ENCODE measurements at regions of chr5 and their contacts with region 1.

Region 1: GRCh38 chr5:172707285-172708182 is 63.5 kb downstream of the DUSP1 start:
- DNase-seq: peak; percentile 77
- ATAC-seq: peak; percentile 99
- H3K4me3 ChIP-seq: peak overlapping the region; percentile 25; the same call in 1 of the 2 replicates
- H3K27ac ChIP-seq: no peak overlapping the region
- H3K4me1 ChIP-seq: peaks cover 4% of the 10 kb centered on the region; the same call in 1 of the 2 replicates
- H3K27me3 ChIP-seq: no peaks in the 10 kb centered on the region
- CTCF ChIP-seq: peak; percentile 88

Region 2: DNA sequence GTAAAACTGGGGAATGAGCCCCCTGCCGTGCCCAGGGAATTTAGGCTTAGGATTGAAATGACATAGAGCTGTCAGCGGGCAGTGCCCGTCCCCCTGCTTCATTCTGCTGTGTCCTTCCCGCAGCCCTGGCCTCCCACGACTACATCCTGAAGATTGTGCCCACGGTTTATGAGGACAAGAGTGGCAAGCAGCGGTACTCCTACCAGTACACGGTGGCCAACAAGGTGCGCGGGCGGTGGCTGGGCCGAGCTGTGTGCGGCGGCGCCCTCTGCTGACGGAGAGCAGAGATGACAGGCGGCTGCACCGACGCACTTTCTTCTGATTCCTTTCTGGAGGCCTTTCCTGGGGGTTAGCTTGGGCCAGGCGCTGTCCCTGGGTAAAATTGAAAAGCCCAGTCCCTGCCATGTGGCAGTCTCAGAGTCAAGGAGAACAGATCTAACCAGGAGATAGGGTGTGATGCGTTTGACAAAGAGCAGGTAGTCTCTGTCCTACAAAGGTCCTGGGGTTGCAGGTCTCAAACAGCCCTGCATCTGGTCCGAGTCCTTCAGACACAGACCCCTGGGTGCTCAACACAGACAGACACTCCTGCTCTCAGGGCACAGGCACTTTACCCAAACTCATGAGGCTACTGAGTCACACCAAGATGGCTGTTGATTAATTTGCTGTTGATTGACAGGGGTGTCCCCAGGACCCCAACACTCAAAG is 224.9 kb after region 1 on chr5:
- CTCF ChIA-PET with region 1: interaction called, 12 read pairs
- POLR2A ChIA-PET with region 1: no interaction called
- intact Hi-C with region 1: no loop called
- DNase-seq: peak; percentile 70
- ATAC-seq: peak; percentile 66
- H3K4me3 ChIP-seq: no peak overlapping the region
- H3K27ac ChIP-seq: peak overlapping the region; percentile 88
- H3K4me1 ChIP-seq: peaks cover 21% of the 10 kb centered on the region
- H3K27me3 ChIP-seq: no peaks in the 10 kb centered on the region
- CTCF ChIP-seq: peak; percentile 95

Region 3: DNA sequence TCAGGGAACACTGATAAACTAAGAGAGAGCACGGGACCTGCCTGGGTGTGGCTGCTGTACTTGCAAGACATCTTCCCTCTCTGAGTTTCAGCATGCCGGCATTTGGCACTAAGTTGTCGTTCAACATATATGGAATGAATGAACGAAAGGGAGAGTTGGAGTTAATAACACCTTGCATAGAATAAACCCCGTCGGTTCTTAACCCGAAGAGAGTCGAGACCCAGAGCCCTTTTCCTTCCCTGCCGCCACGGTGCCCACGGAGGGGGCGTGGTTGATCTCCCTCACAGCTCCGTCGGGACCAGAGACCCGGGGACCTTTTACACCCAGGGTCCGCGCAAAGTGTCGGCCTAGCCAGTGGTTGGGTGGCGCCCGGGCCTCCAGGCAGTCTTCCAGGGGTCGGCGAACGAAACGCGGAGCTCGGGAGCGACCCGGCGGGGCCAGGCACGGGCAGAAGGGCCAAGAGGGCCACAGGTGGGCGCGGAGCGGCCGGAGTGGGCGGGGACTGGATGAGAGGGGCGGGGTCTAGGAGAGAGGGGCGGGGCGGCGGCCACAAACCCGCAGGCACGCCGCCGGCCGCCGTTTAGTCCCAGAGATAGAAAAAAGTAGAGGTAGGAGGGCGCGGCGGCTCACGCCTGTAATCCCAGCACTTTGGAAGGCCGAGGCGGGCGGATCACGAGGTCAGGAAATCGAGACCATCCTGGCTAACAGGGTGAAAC is 251.0 kb after region 1 on chr5:
- CTCF ChIA-PET with region 1: interaction called, 10 read pairs
- POLR2A ChIA-PET with region 1: no interaction called
- intact Hi-C with region 1: loop called (anchors 2 kb)
- DNase-seq: peak; percentile 59
- ATAC-seq: peak; percentile 74
- H3K4me3 ChIP-seq: peak overlapping the region; percentile 92
- H3K27ac ChIP-seq: no peak overlapping the region
- H3K4me1 ChIP-seq: peaks cover 22% of the 10 kb centered on the region
- H3K27me3 ChIP-seq: no peaks in the 10 kb centered on the region
- CTCF ChIP-seq: no peak

Region 4: GRCh38 chr5:173283318-173284288 is 576.1 kb after region 1 on chr5:
- CTCF ChIA-PET with region 1: no interaction called
- POLR2A ChIA-PET with region 1: no interaction called
- intact Hi-C with region 1: loop called (anchors 2 kb)
- DNase-seq: peak; percentile 78
- ATAC-seq: peak; percentile 94
- H3K4me3 ChIP-seq: peak overlapping the region; percentile 60
- H3K27ac ChIP-seq: no peak overlapping the region
- H3K4me1 ChIP-seq: no peaks in the 10 kb centered on the region
- H3K27me3 ChIP-seq: no peaks in the 10 kb centered on the region
- CTCF ChIP-seq: peak; percentile 77

Region 5: GRCh38 chr5:174311531-174312269 is 1604.2 kb after region 1 on chr5:
- CTCF ChIA-PET with region 1: no interaction called
- POLR2A ChIA-PET with region 1: no interaction called
- intact Hi-C with region 1: loop called (anchors 10 kb)
- DNase-seq: peak; percentile 68
- ATAC-seq: peak; percentile 88
- H3K4me3 ChIP-seq: peak overlapping the region; percentile 67
- H3K27ac ChIP-seq: no peak overlapping the region
- H3K4me1 ChIP-seq: no peaks in the 10 kb centered on the region; the same call in 1 of the 2 replicates
- H3K27me3 ChIP-seq: peaks cover 80% of the 10 kb centered on the region
- CTCF ChIP-seq: peak; percentile 88

Measured in PC-3 (cell line).